Heart right ventricle (tissue), 16 donors: ENCODE measurements at regions of chr9 and their contacts with region 1.

Region 1: GRCh38 chr9:116798521-116799021 is 111.5 kb downstream of the TRIM32 start:
- DNase-seq: no peak
- ATAC-seq: no peak
- H3K4me3 ChIP-seq: no peak overlapping the region
- H3K27ac ChIP-seq: no peak overlapping the region
- H3K4me1 ChIP-seq: no peaks in the 10 kb centered on the region
- H3K27me3 ChIP-seq: peaks cover 0 to 6% (median 0%) of the 10 kb centered on the region in 7 donors
- CTCF ChIP-seq: no peak

Region 2: DNA sequence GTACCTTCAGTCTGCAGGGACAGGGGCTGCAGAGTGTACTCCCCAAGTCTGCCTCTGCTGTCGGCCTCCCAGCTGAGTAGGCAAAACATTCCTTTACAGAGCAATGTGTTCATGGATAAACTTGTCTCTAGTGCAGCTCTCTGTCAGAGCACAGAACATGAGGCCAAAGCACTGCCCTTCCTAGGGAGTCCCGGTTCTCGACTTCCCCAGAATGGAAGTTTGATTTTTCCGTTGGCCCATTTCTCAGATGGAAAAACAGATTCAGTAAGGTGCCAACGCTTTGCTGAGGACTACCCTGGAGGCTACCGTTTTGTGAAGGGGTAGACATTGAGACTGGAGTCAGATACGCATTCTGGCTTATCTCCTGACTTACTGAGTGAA is 111.9 kb before region 1 on chr9:
- intact Hi-C with region 1: no loop called
- DNase-seq: no peak
- ATAC-seq: peak; percentile 4 to 56 (median 48)
- H3K4me3 ChIP-seq: peak overlapping the region; percentile 69 to 82 (median 77)
- H3K27ac ChIP-seq: peak overlapping the region; percentile 60 to 91 (median 82)
- H3K4me1 ChIP-seq: peaks cover 5 to 37% (median 21%) of the 10 kb centered on the region in 9 donors
- H3K27me3 ChIP-seq: peaks cover 0 to 6% (median 0%) of the 10 kb centered on the region in 7 donors
- CTCF ChIP-seq: no peak

Region 3: GRCh38 chr9:116817762-116818161 is 19.2 kb after region 1 on chr9:
- intact Hi-C with region 1: loop called in 1 of 10 experiments (anchors 1 kb)
- DNase-seq: no peak
- ATAC-seq: no peak
- H3K4me3 ChIP-seq: no peak overlapping the region
- H3K27ac ChIP-seq: no peak overlapping the region
- H3K4me1 ChIP-seq: no peaks in the 10 kb centered on the region
- H3K27me3 ChIP-seq: no peaks in the 10 kb centered on the region
- CTCF ChIP-seq: no peak